Gastrocnemius medialis (tissue), 4 donors: ENCODE measurements at regions of chr17 and their contacts with region 1.

Region 1: DNA sequence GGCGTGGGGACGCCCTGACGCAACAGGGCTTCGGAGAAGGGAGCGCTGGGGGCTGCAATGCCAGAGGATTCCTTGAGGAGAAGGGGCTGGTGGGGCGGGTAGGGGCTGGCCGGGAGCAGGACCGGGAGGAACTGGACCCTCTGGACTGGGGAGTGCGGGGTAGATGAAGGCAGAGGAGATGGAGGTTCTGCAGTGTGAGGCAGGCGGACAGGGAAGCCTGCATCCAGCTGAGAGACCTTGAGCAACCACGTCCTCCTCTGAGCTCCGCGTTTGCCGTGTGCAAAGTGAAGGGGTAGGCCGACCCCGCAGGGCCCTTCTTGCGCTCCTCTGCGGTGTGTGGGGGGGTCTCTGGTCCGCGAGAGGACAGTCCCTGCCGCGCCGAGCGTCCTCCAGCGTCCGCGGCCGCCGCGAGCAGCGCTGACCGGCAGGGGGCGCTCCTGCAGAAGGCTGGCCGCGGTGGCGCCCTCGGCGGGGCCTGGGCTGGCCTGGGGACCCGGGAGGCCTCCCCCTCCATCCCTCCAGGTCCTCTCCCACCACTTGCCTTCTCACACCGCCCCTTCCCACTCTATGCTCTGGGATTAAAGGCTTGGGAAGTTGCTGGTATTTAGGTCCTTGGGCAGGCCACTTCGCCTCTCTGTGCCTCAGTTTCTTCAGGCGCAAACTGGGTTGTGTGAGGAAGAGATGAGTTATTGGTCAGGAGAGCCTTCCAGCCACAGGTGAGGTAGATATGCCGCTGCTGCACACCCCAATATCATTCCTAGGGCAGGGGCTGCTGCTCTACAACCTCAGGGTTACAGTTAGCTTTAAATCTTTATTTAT is 9.6 kb upstream of the WNT9B start:
- DNase-seq: no peak
- ATAC-seq: no peak
- H3K4me3 ChIP-seq: no peak overlapping the region
- H3K27ac ChIP-seq: no peak overlapping the region
- H3K4me1 ChIP-seq: no peaks in the 10 kb centered on the region
- H3K27me3 ChIP-seq: peaks cover 19 to 32% (median 30%) of the 10 kb centered on the region in 3 donors
- CTCF ChIP-seq: peak; percentile 21 to 76 (median 54)
- POLR2A ChIP-seq: no peak

Region 2: GRCh38 chr17:46795379-46795952 is 46.3 kb before region 1 on chr17:
- in situ Hi-C with region 1: no loop called
- intact Hi-C with region 1: no loop called
- DNase-seq: no peak
- ATAC-seq: no peak
- H3K4me3 ChIP-seq: no peak overlapping the region
- H3K27ac ChIP-seq: no peak overlapping the region
- H3K4me1 ChIP-seq: no peaks in the 10 kb centered on the region
- H3K27me3 ChIP-seq: peaks cover 0 to 13% (median 9%) of the 10 kb centered on the region in 3 donors
- CTCF ChIP-seq: no peak
- POLR2A ChIP-seq: no peak

Region 3: DNA sequence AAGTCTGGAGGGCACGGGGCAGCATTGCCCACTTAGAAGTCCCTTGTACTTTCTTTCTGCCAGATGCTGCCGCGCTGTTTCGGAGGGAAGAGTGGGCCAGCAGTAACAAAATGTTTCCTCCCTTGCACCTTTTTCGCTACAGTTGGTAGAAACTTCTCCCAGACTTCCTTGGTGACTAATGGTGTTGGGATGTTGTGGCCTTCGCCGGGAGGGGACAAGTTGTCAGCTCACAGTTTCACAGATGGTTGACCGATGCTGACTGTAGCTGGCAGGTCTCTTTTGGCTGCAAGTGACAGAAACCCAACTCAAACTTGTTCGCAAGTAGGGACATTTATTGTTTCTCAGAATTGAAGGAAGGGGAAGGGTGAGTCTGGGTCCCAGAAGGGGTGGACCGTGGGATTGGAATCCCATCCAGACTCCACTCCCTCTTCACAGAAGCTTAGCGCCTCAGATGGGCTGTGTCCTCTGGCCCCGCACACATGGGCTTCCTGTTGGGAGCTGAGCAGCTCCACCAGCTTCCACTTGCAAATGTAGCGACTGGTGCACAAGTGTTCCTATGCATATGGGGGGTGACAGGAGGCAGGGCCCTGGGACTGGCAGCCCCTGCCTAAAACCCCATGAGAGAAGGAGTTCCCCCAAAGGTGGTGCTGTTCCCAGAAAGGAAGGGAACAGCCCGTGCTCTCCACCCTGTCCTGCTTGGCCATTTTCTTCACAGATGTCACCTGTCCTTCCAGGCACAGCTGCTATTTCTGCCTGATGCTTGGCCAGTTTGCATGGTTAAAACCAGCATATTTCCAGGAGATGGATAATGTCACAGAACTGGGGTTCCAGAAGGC is 168.2 kb after region 1 on chr17:
- in situ Hi-C with region 1: loop called in 2 of 4 experiments (anchors 25 kb)
- intact Hi-C with region 1: no loop called
- DNase-seq: no peak
- ATAC-seq: no peak
- H3K4me3 ChIP-seq: no peak overlapping the region
- H3K27ac ChIP-seq: no peak overlapping the region
- H3K4me1 ChIP-seq: no peaks in the 10 kb centered on the region
- H3K27me3 ChIP-seq: no peaks in the 10 kb centered on the region
- CTCF ChIP-seq: no peak
- POLR2A ChIP-seq: no peak